CD4-positive, alpha-beta T cell (primary cell): ENCODE measurements at regions of chr10 and their contacts with region 1.

Region 1: DNA sequence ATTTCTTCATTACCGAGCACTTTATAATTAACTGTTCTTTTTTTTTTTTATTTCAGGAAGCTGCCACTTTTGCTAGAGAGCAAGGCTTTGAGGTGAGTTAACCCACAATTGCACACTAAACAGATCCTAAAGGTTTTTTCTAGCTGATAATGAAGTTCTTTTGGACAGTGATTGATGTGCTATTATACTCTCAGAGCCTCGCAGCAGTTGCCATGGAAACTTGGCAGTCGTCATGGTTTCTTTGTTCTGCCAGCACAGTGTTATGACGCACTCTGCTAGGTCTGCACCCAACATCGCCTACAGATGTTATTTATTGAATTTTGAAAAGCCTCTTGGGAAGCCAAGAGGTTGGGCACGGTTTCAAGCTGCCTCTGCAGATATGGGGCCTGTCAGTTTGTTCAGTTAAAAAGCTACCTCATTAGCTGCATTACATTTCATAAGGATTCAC is 237.2 kb upstream of the KAT6B start:
- DNase-seq: peak; percentile 77 to 97 (median 85)
- ATAC-seq: peak; percentile 77
- H3K4me3 ChIP-seq: no peak overlapping the region
- H3K4me3 Mint-ChIP-seq: peak overlapping the region; percentile 66
- H3K27ac ChIP-seq: peak overlapping the region; percentile 65 to 66
- H3K27ac Mint-ChIP-seq: peak overlapping the region; percentile 94
- H3K4me1 ChIP-seq: peaks cover 16% of the 10 kb centered on the region
- H3K4me1 Mint-ChIP-seq: peaks cover 64% of the 10 kb centered on the region
- H3K27me3 ChIP-seq: no peaks in the 10 kb centered on the region
- H3K27me3 Mint-ChIP-seq: no peaks in the 10 kb centered on the region
- CTCF ChIP-seq: no peak

Region 2: GRCh38 chr10:73997787-73998622 is 591.2 kb before region 1 on chr10 and contains the start of gene VCL:
- CTCF ChIA-PET with region 1: no interaction called
- POLR2A ChIA-PET with region 1: no interaction called
- intact Hi-C with region 1: loop called in 1 of 2 experiments (anchors 10 kb)
- DNase-seq: peak; percentile 88 to 98 (median 94)
- ATAC-seq: peak; percentile 95
- H3K4me3 ChIP-seq: peak within 1 kb of the TSS; percentile 95
- H3K4me3 Mint-ChIP-seq: peak within 1 kb of the TSS; percentile 100
- H3K27ac ChIP-seq: peak within 1 kb of the TSS; percentile 45 to 84
- H3K27ac Mint-ChIP-seq: peak within 1 kb of the TSS; percentile 83
- H3K4me1 ChIP-seq: peaks cover 42% of the 10 kb centered on the region
- H3K4me1 Mint-ChIP-seq: peaks cover 62% of the 10 kb centered on the region
- H3K27me3 ChIP-seq: no peaks in the 10 kb centered on the region
- H3K27me3 Mint-ChIP-seq: no peaks in the 10 kb centered on the region
- CTCF ChIP-seq: no peak
- total RNA-seq, gene VCL: 18.5 to 19.7 TPM

Region 3: DNA sequence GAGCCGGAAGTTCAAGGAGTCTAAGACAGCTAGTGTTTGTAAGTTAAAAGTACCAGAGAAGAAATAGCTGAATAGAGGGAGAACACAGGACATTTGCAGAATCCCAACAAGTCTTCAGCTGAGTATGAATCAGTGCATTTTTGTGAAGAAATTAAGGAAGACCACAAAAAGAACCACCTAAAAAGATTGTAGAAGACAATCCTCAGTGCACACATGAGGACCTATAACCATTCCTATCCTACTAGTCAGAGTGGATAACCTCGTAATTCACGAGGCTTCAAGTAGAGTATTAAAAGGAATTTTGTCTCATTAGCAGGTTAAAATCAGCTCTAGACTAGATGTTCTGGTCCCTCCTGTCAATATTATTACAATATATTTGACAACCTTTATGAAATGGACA is 58.3 kb before region 1 on chr10:
- CTCF ChIA-PET with region 1: no interaction called
- POLR2A ChIA-PET with region 1: no interaction called
- intact Hi-C with region 1: loop called in 1 of 2 experiments (anchors 10 kb)
- DNase-seq: no peak
- ATAC-seq: no peak
- H3K4me3 ChIP-seq: no peak overlapping the region
- H3K4me3 Mint-ChIP-seq: no peak overlapping the region
- H3K27ac ChIP-seq: no peak overlapping the region
- H3K27ac Mint-ChIP-seq: no peak overlapping the region
- H3K4me1 ChIP-seq: no peaks in the 10 kb centered on the region
- H3K4me1 Mint-ChIP-seq: no peaks in the 10 kb centered on the region
- H3K27me3 ChIP-seq: no peaks in the 10 kb centered on the region
- H3K27me3 Mint-ChIP-seq: no peaks in the 10 kb centered on the region
- CTCF ChIP-seq: no peak

Region 4: DNA sequence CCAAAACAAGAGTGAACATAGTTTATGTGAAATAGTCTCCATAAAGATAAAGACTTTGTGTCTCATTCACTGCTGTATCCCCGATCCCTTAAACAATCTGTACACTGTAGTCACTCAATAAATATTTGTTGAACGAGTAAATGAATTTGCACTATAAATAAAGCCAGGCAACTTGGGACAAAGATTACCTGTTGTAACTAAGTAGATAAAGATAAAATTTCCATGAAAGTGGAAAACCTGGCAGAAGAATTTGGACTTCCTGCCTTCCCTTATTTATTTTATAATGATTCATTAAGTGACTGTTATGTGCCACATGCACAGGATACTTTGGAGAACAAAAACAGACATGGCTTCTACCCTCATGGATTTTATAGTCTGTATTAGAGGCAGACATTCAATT is 40.6 kb before region 1 on chr10:
- CTCF ChIA-PET with region 1: no interaction called
- POLR2A ChIA-PET with region 1: no interaction called
- intact Hi-C with region 1: loop called in 1 of 2 experiments (anchors 5 kb)
- DNase-seq: no peak
- ATAC-seq: no peak
- H3K4me3 ChIP-seq: no peak overlapping the region
- H3K4me3 Mint-ChIP-seq: no peak overlapping the region
- H3K27ac ChIP-seq: no peak overlapping the region
- H3K27ac Mint-ChIP-seq: no peak overlapping the region
- H3K4me1 ChIP-seq: no peaks in the 10 kb centered on the region
- H3K4me1 Mint-ChIP-seq: peaks cover 5% of the 10 kb centered on the region
- H3K27me3 ChIP-seq: no peaks in the 10 kb centered on the region
- H3K27me3 Mint-ChIP-seq: no peaks in the 10 kb centered on the region
- CTCF ChIP-seq: no peak

Region 5: DNA sequence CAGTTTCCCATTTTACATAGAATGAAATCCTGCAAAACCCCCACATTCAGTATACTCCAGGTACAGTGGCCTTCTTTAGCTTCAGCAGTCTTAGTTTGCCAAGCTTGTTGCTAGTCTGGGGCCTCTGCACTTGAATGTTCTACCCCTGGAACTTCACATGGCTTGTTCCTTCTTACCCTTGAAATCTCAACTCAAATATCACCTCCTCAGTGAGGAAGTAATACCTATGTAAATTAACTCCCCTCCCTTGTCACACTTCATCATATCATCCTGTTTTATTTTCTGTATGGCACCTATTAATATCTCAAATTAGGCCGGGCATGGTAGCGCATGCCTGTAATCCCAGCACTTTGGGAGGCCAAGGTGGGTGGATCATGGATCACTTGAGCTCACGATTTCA is 73.4 kb after region 1 on chr10:
- CTCF ChIA-PET with region 1: no interaction called
- POLR2A ChIA-PET with region 1: no interaction called
- intact Hi-C with region 1: no loop called
- DNase-seq: no peak
- ATAC-seq: no peak
- H3K4me3 ChIP-seq: no peak overlapping the region
- H3K4me3 Mint-ChIP-seq: no peak overlapping the region
- H3K27ac ChIP-seq: no peak overlapping the region
- H3K27ac Mint-ChIP-seq: no peak overlapping the region
- H3K4me1 ChIP-seq: no peaks in the 10 kb centered on the region
- H3K4me1 Mint-ChIP-seq: no peaks in the 10 kb centered on the region
- H3K27me3 ChIP-seq: no peaks in the 10 kb centered on the region
- H3K27me3 Mint-ChIP-seq: no peaks in the 10 kb centered on the region
- CTCF ChIP-seq: no peak

Region 6: DNA sequence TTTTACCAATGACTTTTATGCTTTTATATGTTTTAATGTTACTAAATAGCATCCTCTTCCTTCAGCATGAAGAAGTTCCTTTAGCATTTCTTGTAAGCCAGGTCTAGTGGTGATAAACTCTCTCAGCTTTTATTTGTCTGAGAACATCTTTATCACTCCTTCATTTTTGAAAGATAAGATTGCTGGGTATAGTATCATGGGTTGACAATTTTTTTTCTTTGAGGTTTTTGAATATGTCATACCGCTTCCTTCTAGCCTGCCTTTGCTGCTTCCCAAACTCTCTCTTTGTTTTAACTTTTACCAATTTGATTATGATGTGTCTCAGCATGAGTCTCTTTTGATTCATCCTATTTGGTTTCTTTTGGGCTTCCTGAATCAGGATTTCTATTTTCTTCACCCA is 129.0 kb after region 1 on chr10:
- CTCF ChIA-PET with region 1: no interaction called
- POLR2A ChIA-PET with region 1: no interaction called
- intact Hi-C with region 1: loop called in 1 of 2 experiments (anchors 10 kb)
- DNase-seq: no peak
- ATAC-seq: no peak
- H3K4me3 ChIP-seq: no peak overlapping the region
- H3K4me3 Mint-ChIP-seq: no peak overlapping the region
- H3K27ac ChIP-seq: no peak overlapping the region
- H3K27ac Mint-ChIP-seq: no peak overlapping the region
- H3K4me1 ChIP-seq: no peaks in the 10 kb centered on the region
- H3K4me1 Mint-ChIP-seq: no peaks in the 10 kb centered on the region
- H3K27me3 ChIP-seq: no peaks in the 10 kb centered on the region
- H3K27me3 Mint-ChIP-seq: no peaks in the 10 kb centered on the region
- CTCF ChIP-seq: no peak